ENCODE measurements at regions of chr6 and their contacts with region 1.

Region 1: DNA sequence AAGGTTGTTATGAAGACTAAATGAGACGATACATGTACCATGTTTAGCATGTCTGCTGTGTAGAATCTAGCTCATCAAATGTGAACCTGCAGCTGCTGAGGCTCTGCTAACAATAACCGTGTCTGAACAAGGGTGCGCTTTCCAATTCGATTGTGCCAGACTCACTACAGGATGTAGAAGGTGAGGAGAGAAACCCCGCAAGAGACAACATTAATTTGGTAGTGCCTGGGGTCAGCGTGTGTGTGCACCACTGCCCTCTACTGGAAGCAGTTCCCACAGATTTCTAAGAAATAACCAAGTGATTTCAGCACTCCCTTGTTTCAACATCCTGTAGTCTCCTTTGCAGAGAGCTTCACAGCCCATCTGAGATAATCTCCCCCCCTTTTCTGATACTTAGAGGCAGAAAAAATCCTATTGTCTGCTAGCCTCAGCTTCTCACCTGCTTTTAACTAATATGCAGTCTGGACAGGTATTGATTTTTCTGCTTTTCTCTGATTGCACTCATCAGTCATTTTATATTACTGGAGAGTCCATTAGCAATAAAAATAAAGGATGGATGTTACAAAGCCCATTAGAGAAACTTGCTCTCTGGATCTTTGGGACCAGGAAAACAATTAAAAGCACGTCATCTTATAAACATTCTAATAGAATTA is 96.7 kb upstream of the BACH2 start:
- DNase-seq: peak; percentile 74
- H3K4me3 ChIP-seq: no peak overlapping the region
- H3K27ac ChIP-seq: no peak overlapping the region
- H3K4me1 ChIP-seq: no peaks in the 10 kb centered on the region
- H3K27me3 ChIP-seq: no peaks in the 10 kb centered on the region
- CTCF ChIP-seq: peak; percentile 42 to 63 (median 63)
- POLR2A ChIP-seq: no peak

Region 2: GRCh38 chr6:89966228-89966544 is 427.2 kb before region 1 on chr6:
- intact Hi-C with region 1: loop called (anchors 5 kb)
- DNase-seq: no peak
- H3K4me3 ChIP-seq: no peak overlapping the region
- H3K27ac ChIP-seq: no peak overlapping the region
- H3K4me1 ChIP-seq: no peaks in the 10 kb centered on the region
- H3K27me3 ChIP-seq: no peaks in the 10 kb centered on the region
- CTCF ChIP-seq: no peak
- POLR2A ChIP-seq: no peak

Region 3: GRCh38 chr6:90508753-90509152 is 115.4 kb after region 1 on chr6:
- intact Hi-C with region 1: no loop called
- DNase-seq: no peak
- H3K4me3 ChIP-seq: no peak overlapping the region
- H3K27ac ChIP-seq: no peak overlapping the region
- H3K4me1 ChIP-seq: no peaks in the 10 kb centered on the region
- H3K27me3 ChIP-seq: no peaks in the 10 kb centered on the region
- CTCF ChIP-seq: no peak
- POLR2A ChIP-seq: no peak

Region 4: DNA sequence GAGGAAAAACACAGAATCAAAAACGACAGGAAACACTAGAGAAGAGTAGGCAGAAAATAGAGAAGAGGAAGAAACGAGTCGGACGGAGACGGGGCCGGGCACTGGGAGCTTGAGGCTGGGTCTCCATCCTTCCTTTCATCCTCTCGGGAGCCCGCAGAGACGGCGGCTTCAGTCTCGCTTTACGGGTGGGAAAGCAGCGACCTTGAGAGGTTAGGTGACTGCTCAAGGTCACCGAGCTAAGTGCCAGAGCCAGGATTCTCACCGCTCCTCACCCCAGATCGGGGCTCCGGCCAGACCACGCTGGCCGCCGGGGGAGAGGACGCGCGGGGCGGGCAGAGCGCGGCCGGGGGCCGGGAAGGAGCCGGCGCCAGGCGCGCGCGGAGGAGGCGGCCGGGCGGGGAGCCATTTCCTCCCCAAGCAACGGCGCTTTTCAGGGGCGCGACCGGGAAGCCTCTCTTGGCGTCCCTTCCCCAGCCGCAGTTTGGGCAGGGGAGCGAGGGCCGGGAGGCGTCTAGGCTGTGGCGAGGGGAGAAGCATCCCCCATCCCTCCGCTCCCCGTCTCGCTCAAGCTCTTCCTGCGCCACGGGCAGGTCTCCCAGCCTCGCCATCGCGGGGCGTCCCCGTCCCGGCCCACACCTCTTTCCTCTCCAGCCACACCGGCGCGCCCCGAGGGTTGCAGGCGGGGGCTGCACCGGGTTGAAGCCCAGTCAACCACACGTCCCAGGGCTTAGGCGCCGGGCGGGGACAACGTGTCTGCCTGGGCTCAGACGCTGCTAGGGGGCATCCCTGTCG is 217.6 kb after region 1 on chr6:
- intact Hi-C with region 1: no loop called
- DNase-seq: peak; percentile 57
- H3K4me3 ChIP-seq: peak overlapping the region; percentile 66 to 67
- H3K27ac ChIP-seq: peak overlapping the region; percentile 76 to 83
- H3K4me1 ChIP-seq: no peaks in the 10 kb centered on the region
- H3K27me3 ChIP-seq: no peaks in the 10 kb centered on the region
- CTCF ChIP-seq: no peak
- POLR2A ChIP-seq: no peak